K562 (cell line): ENCODE measurements at regions of chr1 and their contacts with region 1.

Region 1: DNA sequence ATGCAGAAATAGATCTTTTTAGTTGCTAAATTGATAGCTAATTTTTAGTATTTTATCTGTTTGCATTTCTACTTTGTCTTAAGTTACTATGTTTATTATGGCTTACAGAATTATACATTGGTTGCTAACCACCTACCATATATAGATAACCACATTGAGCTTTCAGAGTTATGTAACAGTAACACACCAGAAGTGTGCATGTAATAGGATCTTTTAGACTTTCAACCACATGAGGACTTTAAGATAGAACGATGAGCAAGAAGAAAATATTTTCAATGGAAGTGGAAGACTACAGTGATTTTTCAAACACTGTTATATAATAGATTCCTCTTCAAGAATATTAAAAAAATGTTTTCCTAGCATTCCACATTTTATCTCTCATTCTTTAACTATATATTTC is 28.8 kb downstream of the TOR1AIP1 start:
- DNase-seq: no peak
- ATAC-seq: no peak
- H3K4me3 ChIP-seq: no peak overlapping the region
- H3K27ac ChIP-seq: no peak overlapping the region
- H3K4me1 ChIP-seq: no peaks in the 10 kb centered on the region
- H3K27me3 ChIP-seq: no peaks in the 10 kb centered on the region
- CTCF ChIP-seq: no peak
- EP300 ChIP-seq: no peak
- POLR2A ChIP-seq: no peak
- RAD21 ChIP-seq: no peak

Region 2: DNA sequence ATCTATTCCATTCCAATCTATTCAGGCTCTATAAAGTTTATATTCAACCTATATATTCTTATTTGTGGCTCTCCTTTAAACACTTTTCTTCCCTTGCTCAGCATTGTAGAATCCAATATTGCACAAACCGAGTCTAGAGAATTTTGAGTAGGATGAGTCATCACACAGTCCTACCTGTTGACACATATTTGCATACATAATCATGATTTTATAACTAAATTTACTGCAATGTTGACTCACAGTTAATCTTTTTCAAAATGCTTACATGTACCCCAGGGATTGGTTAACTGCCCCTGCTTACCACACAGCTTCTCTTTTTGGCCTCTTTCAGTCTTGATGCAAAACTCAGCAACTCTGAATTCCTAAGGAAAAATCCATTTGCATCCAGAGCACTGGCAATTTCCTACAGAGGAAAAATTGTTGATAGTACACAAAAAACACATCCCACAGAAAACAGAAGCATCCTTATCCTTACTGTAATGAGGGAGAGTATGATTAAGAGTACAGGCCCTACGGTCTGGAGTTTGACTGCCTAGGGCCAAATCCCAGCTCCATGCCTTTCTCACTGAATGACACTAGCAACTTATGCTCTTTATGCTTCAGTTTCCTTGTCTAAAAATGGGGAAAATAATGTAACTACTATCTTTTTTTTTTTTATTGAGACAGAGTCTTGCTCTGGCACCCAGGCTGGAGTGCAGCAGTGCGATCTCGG is 15.7 kb after region 1 on chr1:
- CTCF ChIA-PET with region 1: no interaction called
- POLR2A ChIA-PET with region 1: interaction called, 19 read pairs
- in situ Hi-C with region 1: no loop called
- intact Hi-C with region 1: no loop called
- DNase-seq: no peak
- ATAC-seq: no peak
- H3K4me3 ChIP-seq: no peak overlapping the region
- H3K27ac ChIP-seq: no peak overlapping the region
- H3K4me1 ChIP-seq: peaks cover 0 to 6% of the 10 kb centered on the region in 2 experiments; a peak in 1 of 5 replicates
- H3K27me3 ChIP-seq: no peaks in the 10 kb centered on the region
- CTCF ChIP-seq: no peak
- EP300 ChIP-seq: no peak
- POLR2A ChIP-seq: no peak
- RAD21 ChIP-seq: no peak

Region 3: GRCh38 chr1:180003026-180003695 is 92.2 kb after region 1 on chr1:
- CTCF ChIA-PET with region 1: no interaction called
- POLR2A ChIA-PET with region 1: no interaction called
- in situ Hi-C with region 1: no loop called
- intact Hi-C with region 1: no loop called
- DNase-seq: no peak
- ATAC-seq: peak; percentile 23; the same call in 1 of the 3 replicates
- H3K4me3 ChIP-seq: no peak overlapping the region
- H3K27ac ChIP-seq: no peak overlapping the region
- H3K4me1 ChIP-seq: no peaks in the 10 kb centered on the region
- H3K27me3 ChIP-seq: no peaks in the 10 kb centered on the region
- CTCF ChIP-seq: no peak
- EP300 ChIP-seq: no peak
- POLR2A ChIP-seq: no peak
- RAD21 ChIP-seq: no peak

Region 4: GRCh38 chr1:180241716-180242526 is 331.0 kb after region 1 on chr1:
- CTCF ChIA-PET with region 1: no interaction called
- POLR2A ChIA-PET with region 1: no interaction called
- in situ Hi-C with region 1: no loop called
- intact Hi-C with region 1: no loop called
- DNase-seq: peak in 3 of 4 experiments; percentile 42 to 49 (median 45)
- ATAC-seq: peak; percentile 59
- H3K4me3 ChIP-seq: no peak overlapping the region
- H3K27ac ChIP-seq: no peak overlapping the region
- H3K4me1 ChIP-seq: no peaks in the 10 kb centered on the region
- H3K27me3 ChIP-seq: peaks cover 37 to 43% of the 10 kb centered on the region in 2 experiments
- CTCF ChIP-seq: no peak
- EP300 ChIP-seq: no peak
- POLR2A ChIP-seq: no peak
- RAD21 ChIP-seq: no peak